MCF 10A (cell line): ENCODE measurements at regions of chr19 and their contacts with region 1.

Region 1: DNA sequence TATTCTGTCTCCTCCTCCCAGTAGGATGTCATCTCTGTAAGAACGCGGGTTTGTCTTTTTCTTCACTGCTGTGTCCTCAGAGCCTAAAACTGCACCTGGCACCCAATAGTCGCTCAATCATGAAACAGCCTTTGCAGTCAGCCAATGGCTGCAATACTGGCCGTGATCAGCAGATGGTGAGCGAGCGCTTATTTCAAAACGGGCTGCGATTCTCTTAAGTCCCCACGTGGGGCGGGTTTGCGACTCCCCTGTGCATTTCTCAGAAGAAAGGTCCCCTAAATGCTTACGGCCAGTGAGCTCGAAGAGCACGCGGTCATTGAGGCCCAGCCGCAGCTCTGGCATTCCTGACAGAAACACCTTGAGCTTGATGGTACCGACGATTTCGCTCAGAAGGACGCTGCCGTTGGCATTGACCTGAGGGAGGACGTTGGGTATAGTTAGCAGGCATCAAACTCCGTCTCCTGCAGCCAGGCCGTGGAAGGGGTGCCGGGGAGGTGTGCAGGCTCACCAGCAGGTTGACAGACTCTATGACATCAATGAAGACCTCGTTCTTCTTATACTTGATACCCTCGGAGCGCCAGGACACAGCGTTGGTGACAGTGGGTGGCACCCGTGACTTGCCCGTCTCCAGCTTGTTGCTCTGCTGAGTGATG is 6.0 kb downstream of the AP1M2 start:
- DNase-seq: peak; percentile 89
- H3K4me3 Mint-ChIP-seq: no peak overlapping the region
- H3K27ac Mint-ChIP-seq: no peak overlapping the region
- H3K4me1 Mint-ChIP-seq: no peaks in the 10 kb centered on the region
- H3K27me3 Mint-ChIP-seq: no peaks in the 10 kb centered on the region
- CTCF ChIP-seq: peak; percentile 98

Region 2: GRCh38 chr19:10565567-10566407 is 15.3 kb before region 1 on chr19 and contains the start of gene KRI1:
- CTCF ChIA-PET with region 1: interaction called, 17 read pairs
- POLR2A ChIA-PET with region 1: no interaction called
- intact Hi-C with region 1: no loop called
- DNase-seq: peak; percentile 98
- H3K4me3 Mint-ChIP-seq: peak within 1 kb of the TSS; percentile 96
- H3K27ac Mint-ChIP-seq: peak within 1 kb of the TSS; percentile 94
- H3K4me1 Mint-ChIP-seq: peaks cover 31% of the 10 kb centered on the region
- H3K27me3 Mint-ChIP-seq: no peaks in the 10 kb centered on the region
- CTCF ChIP-seq: no peak
- total RNA-seq, gene KRI1: 23.3 and 27.4 TPM in 2 replicates

Region 3: GRCh38 chr19:10602330-10603083 is 21.4 kb after region 1 on chr19:
- CTCF ChIA-PET with region 1: interaction called, 10 read pairs
- POLR2A ChIA-PET with region 1: interaction called, 5 read pairs
- intact Hi-C with region 1: no loop called
- DNase-seq: peak; percentile 75
- H3K4me3 Mint-ChIP-seq: peak overlapping the region; percentile 60
- H3K27ac Mint-ChIP-seq: no peak overlapping the region
- H3K4me1 Mint-ChIP-seq: no peaks in the 10 kb centered on the region
- H3K27me3 Mint-ChIP-seq: peaks cover 15% of the 10 kb centered on the region
- CTCF ChIP-seq: no peak

Region 4: GRCh38 chr19:10625003-10625776 is 44.1 kb after region 1 on chr19 and contains the start of gene SLC44A2:
- CTCF ChIA-PET with region 1: interaction called, 16 read pairs
- POLR2A ChIA-PET with region 1: no interaction called
- intact Hi-C with region 1: no loop called
- DNase-seq: peak; percentile 56
- H3K4me3 Mint-ChIP-seq: peak within 1 kb of the TSS; percentile 69
- H3K27ac Mint-ChIP-seq: peak within 1 kb of the TSS; percentile 31
- H3K4me1 Mint-ChIP-seq: peaks cover 4% of the 10 kb centered on the region
- H3K27me3 Mint-ChIP-seq: no peaks in the 10 kb centered on the region
- CTCF ChIP-seq: no peak
- total RNA-seq, gene SLC44A2: 6.2 and 10.6 TPM in 2 replicates

Region 5: DNA sequence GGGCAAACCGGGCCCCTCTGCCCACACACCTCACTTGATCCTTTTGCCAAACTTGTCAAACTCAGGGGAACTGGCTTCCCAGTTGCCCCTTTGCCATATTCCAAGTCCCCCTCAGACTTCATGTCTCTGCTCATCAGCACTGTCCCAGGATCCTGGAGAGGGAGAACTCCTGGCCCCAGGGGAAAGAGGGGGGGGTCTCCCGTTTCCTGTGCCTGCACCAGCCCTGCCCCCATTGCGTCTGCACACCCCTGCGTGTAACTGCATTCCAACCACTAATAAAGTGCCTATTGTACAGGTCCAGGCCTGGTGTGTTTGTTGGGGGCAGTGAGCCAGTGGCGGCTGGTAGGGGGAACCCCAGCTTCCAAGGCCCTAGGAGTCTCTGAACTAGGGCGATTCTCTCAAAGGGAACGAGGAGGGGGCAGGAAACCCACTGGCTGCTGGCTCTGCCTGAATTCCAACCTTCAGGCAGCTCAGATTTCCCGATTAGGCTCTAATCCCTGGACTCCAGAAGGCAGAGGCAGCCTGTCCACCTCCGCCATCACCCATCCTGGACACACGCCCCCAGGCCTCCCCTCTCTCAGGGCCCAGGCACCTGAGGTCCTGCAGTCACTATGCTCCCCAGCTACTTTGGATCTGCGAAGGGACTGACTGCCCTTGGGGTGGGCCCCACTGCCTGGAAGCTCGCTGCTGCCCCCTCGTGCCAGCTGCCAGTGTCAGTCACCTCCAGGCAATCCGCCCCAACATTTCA is 63.3 kb after region 1 on chr19:
- CTCF ChIA-PET with region 1: interaction called, 248 read pairs
- POLR2A ChIA-PET with region 1: interaction called, 3 read pairs
- intact Hi-C with region 1: loop called (anchors 1 kb)
- DNase-seq: peak; percentile 75
- H3K4me3 Mint-ChIP-seq: no peak overlapping the region
- H3K27ac Mint-ChIP-seq: no peak overlapping the region
- H3K4me1 Mint-ChIP-seq: no peaks in the 10 kb centered on the region
- H3K27me3 Mint-ChIP-seq: no peaks in the 10 kb centered on the region
- CTCF ChIP-seq: peak; percentile 87

Region 6: DNA sequence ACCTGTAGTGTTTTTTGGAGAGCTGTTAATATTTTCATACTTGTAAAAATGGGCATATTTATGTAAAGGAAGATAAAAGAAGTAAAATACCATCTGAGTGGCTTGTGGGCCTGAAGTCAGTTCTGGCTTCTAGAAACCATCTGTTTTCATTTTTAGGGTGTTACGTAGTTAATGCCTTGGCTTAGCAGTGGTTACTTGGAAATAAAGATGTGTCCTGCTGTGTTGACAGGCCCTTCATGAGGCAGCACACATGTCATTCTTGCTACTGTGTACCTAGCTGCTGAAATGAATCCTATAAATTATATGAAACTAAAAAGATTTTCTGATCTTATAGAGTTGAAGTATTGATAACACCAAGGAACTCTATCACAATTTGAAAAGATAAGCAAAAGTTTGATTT is 89.1 kb after region 1 on chr19:
- CTCF ChIA-PET with region 1: interaction called, 17 read pairs
- POLR2A ChIA-PET with region 1: interaction called, 3 read pairs
- intact Hi-C with region 1: no loop called
- DNase-seq: no peak
- H3K4me3 Mint-ChIP-seq: no peak overlapping the region
- H3K27ac Mint-ChIP-seq: no peak overlapping the region
- H3K4me1 Mint-ChIP-seq: peaks cover 4% of the 10 kb centered on the region
- H3K27me3 Mint-ChIP-seq: no peaks in the 10 kb centered on the region
- CTCF ChIP-seq: no peak

Region 7: GRCh38 chr19:10695401-10696398 is 114.6 kb after region 1 on chr19:
- CTCF ChIA-PET with region 1: interaction called, 43 read pairs
- POLR2A ChIA-PET with region 1: interaction called, 6 read pairs
- intact Hi-C with region 1: loop called (anchors 1 kb)
- DNase-seq: peak; percentile 95
- H3K4me3 Mint-ChIP-seq: peak overlapping the region; percentile 66
- H3K27ac Mint-ChIP-seq: no peak overlapping the region
- H3K4me1 Mint-ChIP-seq: peaks cover 11% of the 10 kb centered on the region
- H3K27me3 Mint-ChIP-seq: no peaks in the 10 kb centered on the region
- CTCF ChIP-seq: no peak

Region 8: GRCh38 chr19:10724551-10725071 is 143.5 kb after region 1 on chr19:
- CTCF ChIA-PET with region 1: no interaction called
- POLR2A ChIA-PET with region 1: no interaction called
- intact Hi-C with region 1: no loop called
- DNase-seq: no peak
- H3K4me3 Mint-ChIP-seq: no peak overlapping the region
- H3K27ac Mint-ChIP-seq: no peak overlapping the region
- H3K4me1 Mint-ChIP-seq: peaks cover 5% of the 10 kb centered on the region
- H3K27me3 Mint-ChIP-seq: no peaks in the 10 kb centered on the region
- CTCF ChIP-seq: no peak